H1 (cell line): ENCODE measurements at regions of chr7 and their contacts with region 1.

Region 1: GRCh38 chr7:37524797-37525196 is 76.1 kb upstream of the ELMO1 start:
- DNase-seq: no peak
- H3K4me3 ChIP-seq: no peak overlapping the region
- H3K27ac ChIP-seq: no peak overlapping the region
- H3K4me1 ChIP-seq: no peaks in the 10 kb centered on the region
- H3K27me3 ChIP-seq: no peaks in the 10 kb centered on the region
- CTCF ChIP-seq: no peak
- EP300 ChIP-seq: no peak
- POLR2A ChIP-seq: no peak
- RAD21 ChIP-seq: no peak

Region 2: GRCh38 chr7:37510043-37510634 is 14.7 kb before region 1 on chr7:
- CTCF ChIA-PET with region 1: interaction called, 11 read pairs
- POLR2A ChIA-PET with region 1: no interaction called
- DNase-seq: no peak
- H3K4me3 ChIP-seq: no peak overlapping the region
- H3K27ac ChIP-seq: no peak overlapping the region
- H3K4me1 ChIP-seq: no peaks in the 10 kb centered on the region; a peak in 1 of 7 replicates
- H3K27me3 ChIP-seq: no peaks in the 10 kb centered on the region
- CTCF ChIP-seq: peak; percentile 36 to 77 (median 66)
- EP300 ChIP-seq: no peak
- POLR2A ChIP-seq: no peak
- RAD21 ChIP-seq: peak; percentile 74 to 77

Region 3: GRCh38 chr7:37577412-37577811 is 52.6 kb after region 1 on chr7:
- CTCF ChIA-PET with region 1: no interaction called
- POLR2A ChIA-PET with region 1: no interaction called
- DNase-seq: no peak
- H3K4me3 ChIP-seq: no peak overlapping the region
- H3K27ac ChIP-seq: no peak overlapping the region
- H3K4me1 ChIP-seq: peaks cover 0 to 6% (median 3%) of the 10 kb centered on the region in 4 experiments; a peak in 4 of 7 replicates
- H3K27me3 ChIP-seq: no peaks in the 10 kb centered on the region
- CTCF ChIP-seq: no peak
- EP300 ChIP-seq: no peak
- POLR2A ChIP-seq: no peak
- RAD21 ChIP-seq: no peak

Region 4: DNA sequence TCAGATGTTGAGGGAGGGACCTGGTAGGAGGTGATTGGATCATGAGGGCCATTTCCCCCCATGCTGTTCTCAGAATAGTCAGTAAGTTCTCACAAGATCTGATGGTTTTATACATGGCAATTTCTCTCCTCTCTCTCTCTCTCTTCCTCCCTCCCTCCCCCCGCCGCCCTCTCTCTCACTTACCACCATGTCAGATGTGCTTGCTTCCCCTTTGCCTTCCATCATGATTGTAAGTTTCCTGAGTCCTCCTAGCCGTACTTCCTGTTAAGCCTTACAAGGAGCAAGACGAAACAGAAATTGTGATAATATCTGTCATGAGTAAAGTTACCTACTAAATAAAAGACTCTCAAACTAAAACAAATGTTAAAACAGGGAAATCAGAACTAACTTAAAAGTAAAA is 138.9 kb after region 1 on chr7:
- CTCF ChIA-PET with region 1: no interaction called
- POLR2A ChIA-PET with region 1: no interaction called
- DNase-seq: no peak
- H3K4me3 ChIP-seq: no peak overlapping the region
- H3K27ac ChIP-seq: no peak overlapping the region
- H3K4me1 ChIP-seq: peaks cover 2 to 14% (median 9%) of the 10 kb centered on the region in 4 experiments; a peak in 5 of 7 replicates
- H3K27me3 ChIP-seq: no peaks in the 10 kb centered on the region
- CTCF ChIP-seq: no peak
- EP300 ChIP-seq: no peak
- POLR2A ChIP-seq: no peak
- RAD21 ChIP-seq: no peak